ENCODE measurements at regions of chr18 and their contacts with region 1.

Region 1: DNA sequence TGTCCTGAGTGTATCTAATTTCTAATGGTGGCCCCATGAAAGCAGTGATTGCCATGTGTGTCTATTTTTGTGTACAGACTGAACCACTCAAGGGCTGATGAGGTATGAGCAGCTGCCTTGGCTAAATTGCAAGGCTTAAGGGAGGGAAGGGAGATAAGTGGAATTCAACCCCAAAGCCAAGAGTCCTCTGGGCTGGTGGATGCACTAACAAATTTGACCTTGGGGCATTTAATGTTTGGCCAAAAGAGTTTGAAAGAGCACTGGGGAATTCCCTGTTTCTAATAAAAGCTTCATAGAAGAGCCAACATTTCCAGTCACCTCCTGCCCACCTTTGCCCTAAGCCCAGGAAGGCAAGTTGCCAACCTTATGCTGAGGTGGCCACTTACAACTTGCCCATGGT is 172.1 kb downstream of the SETBP1 start:
- DNase-seq: no peak

Region 2: GRCh38 chr18:43797347-43797746 is 1055.5 kb before region 1 on chr18:
- intact Hi-C with region 1: loop called (anchors 5 kb)
- DNase-seq: no peak

Region 3: DNA sequence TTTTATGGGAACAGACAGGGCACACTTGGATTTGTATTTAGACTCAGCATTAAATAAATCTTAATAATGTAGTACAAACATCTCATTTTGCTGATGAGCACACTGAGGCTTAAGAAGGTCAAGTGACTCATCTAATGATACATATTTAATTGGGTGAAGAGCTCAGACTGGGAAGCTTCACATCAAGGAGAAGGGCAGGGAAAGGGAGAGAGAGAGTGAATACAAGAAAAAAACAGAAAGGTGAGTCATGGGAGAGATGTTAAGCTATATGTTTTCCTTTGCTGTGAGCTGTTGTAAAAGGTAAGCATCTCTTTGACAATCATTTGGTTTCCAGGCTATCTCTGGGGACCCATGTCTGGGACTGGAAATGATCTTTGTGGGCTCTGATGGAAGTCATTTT is 105.6 kb after region 1 on chr18:
- intact Hi-C with region 1: loop called (anchors 10 kb)
- DNase-seq: no peak

Region 4: GRCh38 chr18:45014047-45014501 is 161.3 kb after region 1 on chr18:
- intact Hi-C with region 1: no loop called
- DNase-seq: peak in 2 of 10 donors; percentile 24 to 77